Activated CD4-positive, alpha-beta T cell treated with anti-CD3 and anti-CD28 coated beads, Interleukin-2, amount 10 ng/mL, durations not matched to agents 24 days and 14 days (primary cell): ENCODE measurements at regions of chr1 and their contacts with region 1.

Region 1: GRCh38 chr1:8382051-8382505 is 64.2 kb downstream of the SLC45A1 start:
- DNase-seq: no peak
- H3K4me3 Mint-ChIP-seq: peak overlapping the region; percentile 17
- H3K27ac Mint-ChIP-seq: no peak overlapping the region
- H3K4me1 Mint-ChIP-seq: peaks cover 53% of the 10 kb centered on the region
- H3K27me3 Mint-ChIP-seq: no peaks in the 10 kb centered on the region

Region 2: DNA sequence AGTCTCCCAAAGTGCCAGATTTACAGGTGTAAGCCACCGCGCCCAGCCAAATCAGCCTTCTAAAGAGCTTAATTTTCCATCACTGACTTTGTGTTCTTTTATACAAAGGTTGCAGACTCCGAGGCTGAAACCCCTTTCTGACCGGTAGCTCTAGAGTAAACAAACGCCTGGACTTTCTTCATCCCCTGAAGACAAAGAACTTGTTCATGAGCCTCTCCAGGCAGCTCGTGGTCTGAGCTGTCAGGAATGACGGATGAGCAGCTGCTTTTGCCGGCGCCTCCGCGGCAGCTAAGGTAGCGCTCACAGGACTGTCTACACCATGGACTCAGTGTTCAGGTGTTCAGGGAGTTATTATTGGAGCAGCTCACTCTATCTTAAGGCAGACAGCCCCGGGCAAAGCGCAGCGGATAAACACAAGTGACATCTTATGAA is 227.4 kb before region 1 on chr1:
- intact Hi-C with region 1: no loop called
- DNase-seq: no peak
- H3K4me3 Mint-ChIP-seq: no peak overlapping the region
- H3K27ac Mint-ChIP-seq: no peak overlapping the region
- H3K4me1 Mint-ChIP-seq: peaks cover 34% of the 10 kb centered on the region
- H3K27me3 Mint-ChIP-seq: peaks cover 16% of the 10 kb centered on the region

Region 3: DNA sequence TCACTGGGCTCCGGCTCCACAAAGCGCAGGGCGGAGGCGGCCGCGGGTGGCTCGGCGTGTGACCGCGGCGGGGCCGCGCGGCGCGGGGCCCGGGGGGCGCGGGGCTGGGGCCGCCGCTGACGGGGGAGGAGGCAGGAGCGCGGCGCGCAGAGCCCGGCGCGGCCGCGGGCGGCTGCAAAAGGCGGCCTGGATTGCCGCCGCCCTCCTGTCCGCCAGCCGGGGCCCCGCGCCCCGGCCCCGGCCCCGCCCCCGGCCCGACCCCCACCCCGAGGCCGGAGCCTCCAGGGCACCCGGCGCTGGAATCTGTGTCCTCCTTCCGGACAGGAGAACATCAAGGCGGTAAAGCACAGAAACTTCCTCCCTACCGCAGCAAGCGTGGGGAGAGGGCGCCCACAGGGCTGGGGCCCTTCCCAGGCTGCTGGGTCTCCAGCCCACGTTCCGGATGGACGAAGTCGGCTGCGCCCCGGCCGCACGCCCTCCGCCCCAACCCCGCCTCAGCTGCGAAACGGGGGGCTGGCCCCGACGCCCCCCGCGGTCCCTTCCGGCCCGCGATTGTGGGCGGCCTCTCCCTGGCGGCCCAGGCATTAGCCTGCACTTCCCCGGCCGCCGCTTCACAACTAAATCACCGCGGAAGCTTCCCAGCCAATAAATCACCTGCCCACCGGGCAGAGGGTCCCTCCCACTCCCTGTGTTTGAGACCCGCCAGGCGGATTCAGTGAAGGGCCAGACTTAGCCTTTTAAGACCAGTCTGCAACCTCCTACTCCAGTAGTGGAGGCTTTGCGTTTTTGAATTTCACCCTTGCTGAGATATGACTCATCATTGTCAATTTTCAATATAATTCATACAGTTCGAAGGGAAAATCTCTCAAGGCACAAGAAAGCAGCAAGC is 41.8 kb after region 1 on chr1:
- intact Hi-C with region 1: loop called (anchors 5 kb)
- DNase-seq: peak; percentile 83
- H3K4me3 Mint-ChIP-seq: peak overlapping the region; percentile 86
- H3K27ac Mint-ChIP-seq: peak overlapping the region; percentile 90
- H3K4me1 Mint-ChIP-seq: peaks cover 40% of the 10 kb centered on the region
- H3K27me3 Mint-ChIP-seq: no peaks in the 10 kb centered on the region